Activated CD4-positive, alpha-beta memory T cell treated with anti-CD3 and anti-CD28 coated beads for 36 hours (primary cell): ENCODE measurements at regions of chr12 and their contacts with region 1.

Region 1: GRCh38 chr12:68497702-68498101 is 113.0 kb upstream of the RAP1B start:
- DNase-seq: peak; percentile 24
- H3K4me3 Mint-ChIP-seq: peak overlapping the region; percentile 57
- H3K27ac Mint-ChIP-seq: peak overlapping the region; percentile 92
- H3K4me1 Mint-ChIP-seq: peaks cover 29% of the 10 kb centered on the region
- H3K27me3 Mint-ChIP-seq: no peaks in the 10 kb centered on the region

Region 2: GRCh38 chr12:68374307-68374982 is 123.3 kb before region 1 on chr12:
- CTCF ChIA-PET with region 1: no interaction called
- POLR2A ChIA-PET with region 1: interaction called, 15 read pairs
- intact Hi-C with region 1: loop called (anchors 1 kb)
- DNase-seq: peak; percentile 84
- H3K4me3 Mint-ChIP-seq: peak overlapping the region; percentile 27
- H3K27ac Mint-ChIP-seq: peak overlapping the region; percentile 98
- H3K4me1 Mint-ChIP-seq: peaks cover 45% of the 10 kb centered on the region
- H3K27me3 Mint-ChIP-seq: no peaks in the 10 kb centered on the region

Region 3: DNA sequence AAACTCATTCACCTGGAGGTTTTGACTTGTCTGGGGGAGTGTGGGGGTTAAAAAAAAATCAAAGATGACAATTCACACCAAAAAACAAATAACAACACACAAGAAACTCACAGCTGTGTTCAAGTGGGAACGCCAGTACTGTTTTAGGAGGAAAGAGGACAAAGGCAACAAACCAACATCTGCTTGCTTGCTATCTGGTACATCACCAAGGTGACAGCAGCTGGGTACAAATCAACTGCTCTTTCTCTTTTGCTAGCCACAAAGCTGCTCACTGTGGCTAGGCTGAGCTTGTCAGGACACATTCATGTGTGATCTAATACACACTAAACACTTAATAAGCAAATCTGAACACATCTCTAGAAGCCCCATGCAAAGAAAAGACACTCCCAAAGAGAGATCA is 15.0 kb before region 1 on chr12:
- CTCF ChIA-PET with region 1: interaction called, 9 read pairs
- POLR2A ChIA-PET with region 1: interaction called, 31 read pairs
- intact Hi-C with region 1: loop called (anchors 1 kb)
- DNase-seq: peak; percentile 49
- H3K4me3 Mint-ChIP-seq: no peak overlapping the region
- H3K27ac Mint-ChIP-seq: peak overlapping the region; percentile 94
- H3K4me1 Mint-ChIP-seq: peaks cover 50% of the 10 kb centered on the region
- H3K27me3 Mint-ChIP-seq: no peaks in the 10 kb centered on the region

Region 4: GRCh38 chr12:68587448-68587873 is 89.8 kb after region 1 on chr12:
- CTCF ChIA-PET with region 1: interaction called, 3 read pairs
- POLR2A ChIA-PET with region 1: interaction called, 4 read pairs
- intact Hi-C with region 1: loop called (anchors 1 kb)
- DNase-seq: peak; percentile 70
- H3K4me3 Mint-ChIP-seq: no peak overlapping the region
- H3K27ac Mint-ChIP-seq: peak overlapping the region; percentile 39
- H3K4me1 Mint-ChIP-seq: peaks cover 34% of the 10 kb centered on the region
- H3K27me3 Mint-ChIP-seq: no peaks in the 10 kb centered on the region